ENCODE measurements at regions of chr7 and their contacts with region 1.

Region 1: GRCh38 chr7:87797798-87798403 is 78.3 kb downstream of the SLC25A40 start:
- DNase-seq: peak; percentile 68
- ATAC-seq: peak; percentile 96
- H3K4me3 ChIP-seq: no peak overlapping the region
- H3K27ac ChIP-seq: no peak overlapping the region
- H3K4me1 ChIP-seq: no peaks in the 10 kb centered on the region
- H3K27me3 ChIP-seq: no peaks in the 10 kb centered on the region
- CTCF ChIP-seq: peak; percentile 77

Region 2: DNA sequence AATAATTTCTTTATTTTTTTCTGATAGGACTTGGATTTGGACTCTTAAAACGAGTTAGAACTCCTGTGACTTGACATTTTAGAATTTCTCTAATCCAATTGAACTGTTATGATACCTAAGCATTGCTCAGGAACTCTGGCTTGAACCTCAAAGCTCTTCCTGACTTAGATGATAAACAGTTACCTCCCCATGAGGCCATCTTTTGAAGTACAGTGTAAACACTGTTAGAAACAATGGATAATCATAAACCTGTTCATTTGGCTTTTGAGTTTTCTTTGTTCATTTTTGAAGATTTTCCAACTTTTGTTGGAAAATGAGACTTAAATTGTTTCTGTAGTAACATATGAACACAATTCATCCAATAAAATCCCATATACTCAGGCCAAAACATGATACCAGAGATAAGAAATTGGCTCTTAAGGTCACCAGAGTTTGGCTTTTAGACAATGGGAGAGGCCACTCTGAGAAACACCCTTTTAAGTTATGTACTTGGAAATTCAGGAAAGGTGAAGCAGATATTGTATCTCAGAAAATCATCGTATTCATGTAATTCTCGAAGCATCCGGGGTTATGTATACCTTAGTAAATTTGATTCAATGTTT is 110.1 kb before region 1 on chr7:
- CTCF ChIA-PET with region 1: no interaction called
- POLR2A ChIA-PET with region 1: no interaction called
- intact Hi-C with region 1: no loop called
- DNase-seq: no peak
- ATAC-seq: no peak
- H3K4me3 ChIP-seq: no peak overlapping the region
- H3K27ac ChIP-seq: no peak overlapping the region
- H3K4me1 ChIP-seq: no peaks in the 10 kb centered on the region
- H3K27me3 ChIP-seq: no peaks in the 10 kb centered on the region
- CTCF ChIP-seq: no peak

Region 3: DNA sequence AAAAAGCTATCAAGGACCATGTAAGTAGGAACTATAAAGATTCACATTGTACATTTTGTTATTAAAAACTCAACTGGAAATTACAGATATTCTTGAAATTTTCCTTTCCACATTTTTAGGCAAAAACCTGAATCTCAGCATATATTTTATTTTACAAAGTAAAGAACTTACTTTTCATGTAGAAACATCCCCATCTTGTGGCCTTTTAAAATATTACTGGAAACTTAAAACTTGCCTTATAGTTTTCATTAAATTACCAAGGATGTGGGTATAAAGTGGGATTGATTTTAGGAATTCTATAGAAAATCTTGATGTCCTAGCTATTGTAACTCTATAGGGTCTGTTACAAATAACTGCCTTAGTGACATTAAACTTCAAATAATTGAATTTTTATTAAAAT is 89.0 kb after region 1 on chr7:
- CTCF ChIA-PET with region 1: no interaction called
- POLR2A ChIA-PET with region 1: no interaction called
- intact Hi-C with region 1: loop called (anchors 1 kb)
- DNase-seq: peak; percentile 68
- ATAC-seq: no peak
- H3K4me3 ChIP-seq: no peak overlapping the region
- H3K27ac ChIP-seq: no peak overlapping the region
- H3K4me1 ChIP-seq: no peaks in the 10 kb centered on the region
- H3K27me3 ChIP-seq: no peaks in the 10 kb centered on the region
- CTCF ChIP-seq: peak; percentile 64

Region 4: DNA sequence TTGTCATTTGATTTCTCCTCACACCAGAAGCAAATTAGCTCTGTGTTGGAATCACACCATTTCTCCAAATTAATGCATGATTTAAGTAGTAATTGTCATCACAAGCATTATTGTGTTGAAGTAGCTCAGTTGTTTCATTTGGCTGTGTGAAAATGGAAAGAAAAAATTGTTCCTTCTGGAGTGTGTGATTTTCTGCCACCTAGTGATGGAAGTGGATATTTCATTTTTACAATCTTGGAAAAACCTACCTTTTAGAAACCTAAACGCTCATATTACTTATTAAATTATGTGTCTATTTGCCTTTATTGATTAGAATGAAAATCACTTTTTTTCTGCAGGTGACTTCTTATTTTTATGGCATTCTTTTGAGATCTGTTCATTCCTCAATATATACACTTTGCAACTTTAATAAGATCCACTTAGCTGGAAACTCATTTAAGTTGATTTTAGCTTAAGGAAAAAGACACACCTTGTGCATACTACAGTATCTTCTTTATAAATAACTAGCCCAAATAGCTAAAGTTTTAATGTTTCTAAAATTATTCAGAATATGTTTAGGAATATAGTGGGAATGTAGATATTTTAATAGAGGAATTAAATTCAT is 371.9 kb after region 1 on chr7:
- CTCF ChIA-PET with region 1: no interaction called
- POLR2A ChIA-PET with region 1: no interaction called
- intact Hi-C with region 1: loop called (anchors 2 kb)
- DNase-seq: peak; percentile 55
- ATAC-seq: peak; percentile 51; the same call in 1 of the 2 replicates
- H3K4me3 ChIP-seq: no peak overlapping the region
- H3K27ac ChIP-seq: no peak overlapping the region
- H3K4me1 ChIP-seq: no peaks in the 10 kb centered on the region
- H3K27me3 ChIP-seq: no peaks in the 10 kb centered on the region
- CTCF ChIP-seq: peak; percentile 68